Activated naive CD4-positive, alpha-beta T cell treated with anti-CD3 and anti-CD28 coated beads for 36 hours (primary cell): ENCODE measurements at regions of chr5 and their contacts with region 1.

Region 1: GRCh38 chr5:176537608-176538504 is 654 bp upstream of the RNF44 start:
- DNase-seq: peak; percentile 99
- H3K4me3 Mint-ChIP-seq: peak overlapping the region; percentile 87
- H3K27ac Mint-ChIP-seq: peak overlapping the region; percentile 93
- H3K4me1 Mint-ChIP-seq: peaks cover 67% of the 10 kb centered on the region
- H3K27me3 Mint-ChIP-seq: no peaks in the 10 kb centered on the region

Region 2: GRCh38 chr5:175517818-175518450 is 1019.9 kb before region 1 on chr5:
- CTCF ChIA-PET with region 1: no interaction called
- intact Hi-C with region 1: loop called (anchors 2 kb)
- DNase-seq: peak; percentile 95
- H3K4me3 Mint-ChIP-seq: peak overlapping the region; percentile 59
- H3K27ac Mint-ChIP-seq: peak overlapping the region; percentile 99
- H3K4me1 Mint-ChIP-seq: peaks cover 87% of the 10 kb centered on the region
- H3K27me3 Mint-ChIP-seq: no peaks in the 10 kb centered on the region

Region 3: DNA sequence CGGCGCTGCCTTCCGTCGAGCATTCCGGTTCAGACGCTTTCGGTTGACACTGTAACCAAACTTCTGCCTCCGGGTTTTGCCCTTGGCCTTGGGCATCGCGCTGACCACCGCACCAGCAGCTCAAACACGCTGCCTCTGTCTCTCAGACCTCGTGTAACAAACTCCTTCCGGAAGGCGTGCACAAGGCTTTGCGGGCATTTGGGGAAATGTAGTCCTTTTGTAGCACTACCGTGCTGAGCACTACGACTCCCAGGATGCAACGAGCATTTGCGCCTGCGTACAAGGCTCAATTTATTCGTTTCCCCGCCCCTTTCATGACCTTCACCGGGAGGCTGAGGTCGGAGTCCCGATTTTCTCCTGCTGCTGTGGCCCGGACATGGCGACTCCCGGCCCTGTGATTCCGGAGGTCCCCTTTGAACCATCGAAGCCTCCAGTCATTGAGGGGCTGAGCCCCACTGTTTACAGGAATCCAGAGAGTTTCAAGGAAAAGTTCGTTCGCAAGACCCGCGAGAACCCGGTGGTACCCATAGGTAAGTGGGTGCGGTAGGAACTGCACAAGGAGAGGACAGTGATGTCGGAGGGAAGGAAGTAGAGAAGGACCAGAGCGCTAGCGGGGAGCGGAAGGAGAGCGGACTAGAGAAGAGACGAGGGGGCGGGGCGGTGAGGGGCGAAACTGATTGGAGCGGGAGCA is 149.3 kb before region 1 on chr5 and contains the starts of genes HIGD2A and NOP16:
- CTCF ChIA-PET with region 1: no interaction called
- intact Hi-C with region 1: loop called (anchors 1 kb)
- DNase-seq: peak; percentile 100
- H3K4me3 Mint-ChIP-seq: peak within 1 kb of the TSS; percentile 100
- H3K27ac Mint-ChIP-seq: peak within 1 kb of the TSS; percentile 100
- H3K4me1 Mint-ChIP-seq: peaks cover 33% of the 10 kb centered on the region
- H3K27me3 Mint-ChIP-seq: no peaks in the 10 kb centered on the region
- total RNA-seq, gene HIGD2A: 154 to 155 TPM
- total RNA-seq, gene NOP16: 42.1 to 43.1 TPM

Region 4: DNA sequence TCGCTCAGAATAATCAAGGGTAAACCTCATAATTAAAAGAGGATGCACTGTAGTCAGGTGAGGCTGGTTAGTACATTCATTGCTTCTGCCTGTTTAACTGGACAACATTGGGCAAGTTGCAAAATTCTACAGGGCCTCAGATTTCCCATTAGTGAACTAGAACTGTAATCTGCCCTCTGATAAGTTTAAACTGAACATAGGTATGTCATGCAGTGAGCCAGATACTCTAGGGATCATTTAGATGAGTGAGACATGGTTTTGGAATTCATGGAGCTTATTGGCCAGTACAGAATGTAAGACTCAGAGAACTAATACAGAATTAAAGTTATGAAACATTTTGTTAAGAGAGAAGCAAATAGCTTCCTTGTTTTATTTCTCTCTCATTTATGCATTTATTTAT is 36.5 kb before region 1 on chr5:
- CTCF ChIA-PET with region 1: no interaction called
- intact Hi-C with region 1: loop called (anchors 2 kb)
- DNase-seq: no peak
- H3K4me3 Mint-ChIP-seq: no peak overlapping the region
- H3K27ac Mint-ChIP-seq: no peak overlapping the region
- H3K4me1 Mint-ChIP-seq: no peaks in the 10 kb centered on the region
- H3K27me3 Mint-ChIP-seq: no peaks in the 10 kb centered on the region

Region 5: GRCh38 chr5:176579323-176579722 is 41.5 kb after region 1 on chr5:
- CTCF ChIA-PET with region 1: no interaction called
- intact Hi-C with region 1: no loop called
- DNase-seq: no peak
- H3K4me3 Mint-ChIP-seq: no peak overlapping the region
- H3K27ac Mint-ChIP-seq: no peak overlapping the region
- H3K4me1 Mint-ChIP-seq: no peaks in the 10 kb centered on the region
- H3K27me3 Mint-ChIP-seq: no peaks in the 10 kb centered on the region

Region 6: DNA sequence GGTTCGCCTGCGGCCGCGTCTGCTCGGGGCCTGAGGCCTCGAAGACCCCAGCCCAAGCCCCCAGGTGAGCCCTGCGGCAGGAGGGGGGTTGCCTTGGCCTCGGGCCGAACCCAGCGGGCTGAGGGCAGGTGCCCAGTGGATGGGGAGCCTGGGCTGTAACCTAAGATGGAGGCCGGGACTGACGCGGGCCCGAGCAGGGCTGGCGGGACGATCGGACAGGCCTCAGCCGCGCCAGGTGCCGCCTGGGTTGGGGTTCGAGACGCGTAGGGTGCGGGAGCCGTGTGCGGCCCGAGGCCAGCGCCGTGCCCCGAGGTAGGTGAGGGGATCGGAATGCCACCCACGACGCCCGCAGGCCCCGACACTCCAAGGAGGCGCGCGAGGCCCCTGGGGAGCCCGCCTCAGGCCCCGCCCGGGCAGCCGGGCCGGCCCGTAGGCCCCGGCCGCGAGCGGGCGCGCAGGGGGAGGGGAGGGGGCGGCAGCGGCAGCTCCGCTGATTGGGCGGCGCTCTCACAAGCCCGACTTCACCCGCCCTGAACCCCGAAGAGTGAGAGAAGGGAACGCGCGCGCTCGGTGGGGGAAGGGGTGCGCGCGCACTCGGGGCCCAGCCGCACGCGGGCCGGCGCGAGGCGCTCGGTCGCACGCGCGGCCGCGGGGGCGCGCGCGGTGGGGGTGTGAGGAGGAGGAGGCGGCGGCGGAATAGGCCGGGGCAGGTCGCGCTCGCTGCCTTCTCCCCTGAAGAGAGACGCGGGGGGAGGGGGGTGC is 595.4 kb after region 1 on chr5 and contains the start of gene NSD1:
- CTCF ChIA-PET with region 1: no interaction called
- intact Hi-C with region 1: loop called (anchors 2 kb)
- DNase-seq: peak; percentile 90
- H3K4me3 Mint-ChIP-seq: peak within 1 kb of the TSS; percentile 88
- H3K27ac Mint-ChIP-seq: peak within 1 kb of the TSS; percentile 88
- H3K4me1 Mint-ChIP-seq: peaks cover 52% of the 10 kb centered on the region
- H3K27me3 Mint-ChIP-seq: no peaks in the 10 kb centered on the region
- total RNA-seq, gene NSD1: 50.2 to 51.7 TPM

Region 7: GRCh38 chr5:177425801-177426565 is 888.1 kb after region 1 on chr5:
- CTCF ChIA-PET with region 1: no interaction called
- intact Hi-C with region 1: loop called (anchors 5 kb)
- DNase-seq: peak; percentile 100
- H3K4me3 Mint-ChIP-seq: peak overlapping the region; percentile 88
- H3K27ac Mint-ChIP-seq: peak overlapping the region; percentile 95
- H3K4me1 Mint-ChIP-seq: peaks cover 33% of the 10 kb centered on the region
- H3K27me3 Mint-ChIP-seq: no peaks in the 10 kb centered on the region